Psoas muscle (tissue), 8 donors: ENCODE measurements at regions of chr17 and their contacts with region 1.

Region 1: GRCh38 chr17:43393944-43394482 is 4.8 kb upstream of the ARL4D start:
- DNase-seq: peak; percentile 87 to 91
- ATAC-seq: peak; percentile 71 to 76 (median 73)
- H3K4me3 ChIP-seq: peak overlapping the region; percentile 50
- H3K27ac ChIP-seq: peak overlapping the region; percentile 24
- H3K4me1 ChIP-seq: peaks cover 4% of the 10 kb centered on the region
- H3K27me3 ChIP-seq: no peaks in the 10 kb centered on the region
- CTCF ChIP-seq: peak; percentile 93

Region 2: GRCh38 chr17:43442711-43443110 is 48.7 kb after region 1 on chr17:
- intact Hi-C with region 1: loop called in 1 of 2 experiments (anchors 5 kb)
- DNase-seq: no peak
- ATAC-seq: no peak
- H3K4me3 ChIP-seq: no peak overlapping the region
- H3K27ac ChIP-seq: no peak overlapping the region
- H3K4me1 ChIP-seq: no peaks in the 10 kb centered on the region
- H3K27me3 ChIP-seq: peaks cover 0 to 3% (median 0%) of the 10 kb centered on the region in 3 donors
- CTCF ChIP-seq: no peak